ENCODE measurements at regions of chr3 and their contacts with region 1.

Region 1: DNA sequence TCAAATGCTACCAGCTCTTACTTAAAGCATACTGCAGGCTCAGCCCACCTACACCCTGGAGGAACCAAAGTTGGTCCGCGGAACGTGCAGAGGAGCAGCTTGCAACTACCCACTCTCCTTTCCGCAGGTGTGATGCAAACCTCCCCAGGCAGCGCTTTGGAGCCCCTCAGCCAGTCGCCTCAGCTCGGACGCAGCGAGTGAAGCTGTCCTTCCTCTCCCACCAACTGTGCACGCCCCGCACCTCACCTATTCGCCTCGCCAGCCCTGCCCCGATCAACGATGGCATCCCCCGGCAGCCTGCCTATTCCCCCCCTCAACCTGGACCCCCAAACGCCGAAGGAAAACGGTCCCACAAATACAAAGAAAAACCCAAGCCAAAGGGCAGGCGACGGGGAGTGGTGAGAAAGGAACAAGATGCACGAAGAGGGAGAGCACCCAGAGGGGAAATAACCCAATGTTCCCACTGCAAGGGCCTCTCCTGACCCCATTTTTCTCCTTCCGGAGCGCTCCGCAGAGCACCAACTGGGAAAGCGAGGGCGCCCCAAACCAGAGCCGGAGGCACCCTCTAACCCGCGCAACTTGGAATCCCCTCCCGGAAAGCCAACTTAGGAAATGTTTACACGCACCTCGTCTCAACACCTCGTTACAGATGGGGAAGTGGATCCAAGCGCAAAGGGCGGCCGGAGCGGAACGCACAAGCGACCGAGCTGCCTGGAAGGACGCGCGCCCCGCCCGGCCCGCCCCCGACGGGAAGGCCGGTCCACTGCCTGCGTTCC is 665 bp downstream of the GLB1 start:
- DNase-seq: peak; percentile 30
- ATAC-seq: peak; percentile 70
- H3K4me3 ChIP-seq: peak overlapping the region; percentile 91
- H3K27ac ChIP-seq: peak overlapping the region; percentile 85
- H3K4me1 ChIP-seq: peaks cover 3% of the 10 kb centered on the region; the same call in 1 of the 2 replicates
- H3K27me3 ChIP-seq: no peaks in the 10 kb centered on the region
- CTCF ChIP-seq: no peak
- POLR2A ChIP-seq: no peak
- RAD21 ChIP-seq: no peak

Region 2: DNA sequence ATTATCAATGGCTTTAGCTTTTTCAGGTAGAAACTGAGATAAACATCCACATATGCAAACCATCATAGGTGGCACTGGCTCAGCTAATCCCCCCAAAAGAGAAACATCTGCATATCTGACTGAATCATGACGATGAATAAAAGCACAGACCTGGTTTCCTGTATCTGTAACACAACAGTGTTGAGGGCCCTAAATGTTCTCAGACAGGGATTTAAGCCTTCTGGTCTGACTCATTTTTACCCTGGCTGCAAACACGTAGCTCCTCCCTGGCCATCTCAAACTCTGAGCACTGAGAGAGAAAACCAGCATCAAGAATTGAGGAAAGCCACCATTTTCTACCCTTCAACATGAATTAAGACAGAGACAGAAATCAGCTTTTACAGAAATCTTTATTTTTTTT is 34.5 kb before region 1 on chr3:
- CTCF ChIA-PET with region 1: no interaction called
- POLR2A ChIA-PET with region 1: no interaction called
- dilution Hi-C with region 1: no loop called
- in situ Hi-C with region 1: no loop called
- intact Hi-C with region 1: no loop called
- DNase-seq: peak; percentile 83
- ATAC-seq: peak; percentile 88
- H3K4me3 ChIP-seq: no peak overlapping the region
- H3K27ac ChIP-seq: no peak overlapping the region
- H3K4me1 ChIP-seq: peaks cover 2% of the 10 kb centered on the region; the same call in 1 of the 2 replicates
- H3K27me3 ChIP-seq: no peaks in the 10 kb centered on the region
- CTCF ChIP-seq: no peak
- POLR2A ChIP-seq: no peak
- RAD21 ChIP-seq: no peak

Region 3: DNA sequence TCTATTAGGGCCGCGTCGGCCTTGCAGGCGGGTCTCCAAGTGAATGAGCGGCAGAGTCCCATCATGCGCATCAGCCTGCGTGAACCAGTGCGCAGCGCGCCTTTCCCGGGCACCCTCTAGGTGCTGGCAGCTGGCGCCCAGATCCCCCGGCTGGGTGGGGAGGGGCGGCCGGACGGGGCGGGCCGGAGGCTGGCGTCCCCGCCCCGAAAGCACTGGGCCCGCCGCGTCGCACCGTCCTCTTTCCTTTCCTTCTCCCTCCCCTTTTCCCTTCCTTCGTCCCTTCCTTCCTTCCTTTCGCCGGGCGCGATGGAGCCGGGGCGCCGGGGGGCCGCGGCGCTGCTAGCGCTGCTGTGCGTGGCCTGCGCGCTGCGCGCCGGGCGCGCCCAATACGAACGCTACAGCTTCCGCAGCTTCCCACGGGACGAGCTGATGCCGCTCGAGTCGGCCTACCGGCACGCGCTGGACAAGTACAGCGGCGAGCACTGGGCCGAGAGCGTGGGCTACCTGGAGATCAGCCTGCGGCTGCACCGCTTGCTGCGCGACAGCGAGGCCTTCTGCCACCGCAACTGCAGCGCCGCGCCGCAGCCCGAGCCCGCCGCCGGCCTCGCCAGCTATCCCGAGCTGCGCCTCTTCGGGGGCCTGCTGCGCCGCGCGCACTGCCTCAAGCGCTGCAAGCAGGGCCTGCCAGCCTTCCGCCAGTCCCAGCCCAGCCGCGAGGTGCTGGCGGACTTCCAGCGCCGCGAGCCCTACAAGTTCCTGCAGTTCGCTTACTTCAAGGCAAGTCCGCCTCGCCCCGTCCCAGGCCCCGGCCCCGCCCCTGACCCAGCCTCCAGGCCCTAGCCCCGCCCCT is 17.7 kb after region 1 on chr3 and contains the start of gene CRTAP:
- CTCF ChIA-PET with region 1: no interaction called
- POLR2A ChIA-PET with region 1: no interaction called
- dilution Hi-C with region 1: no loop called
- in situ Hi-C with region 1: no loop called
- intact Hi-C with region 1: loop called (anchors 1 kb)
- DNase-seq: peak; percentile 94
- ATAC-seq: peak; percentile 91
- H3K4me3 ChIP-seq: peak within 1 kb of the TSS; percentile 78
- H3K27ac ChIP-seq: peak within 1 kb of the TSS; percentile 82
- H3K4me1 ChIP-seq: no peaks in the 10 kb centered on the region; the same call in 1 of the 2 replicates
- H3K27me3 ChIP-seq: no peaks in the 10 kb centered on the region
- CTCF ChIP-seq: no peak; the same call in 1 of the 2 replicates
- POLR2A ChIP-seq: no peak
- RAD21 ChIP-seq: no peak
- total RNA-seq, gene CRTAP: 86.9 and 108 TPM in 2 replicates